Tibial artery (tissue), 4 donors: ENCODE measurements at regions of chr7 and their contacts with region 1.

Region 1: GRCh38 chr7:120867932-120868331 is 10.0 kb upstream of the TSPAN12 start:
- DNase-seq: no peak
- H3K4me3 ChIP-seq: no peak overlapping the region
- H3K27ac ChIP-seq: no peak overlapping the region
- H3K4me1 ChIP-seq: peaks cover 0 to 19% (median 7%) of the 10 kb centered on the region in 4 donors
- H3K27me3 ChIP-seq: no peaks in the 10 kb centered on the region
- CTCF ChIP-seq: no peak

Region 2: DNA sequence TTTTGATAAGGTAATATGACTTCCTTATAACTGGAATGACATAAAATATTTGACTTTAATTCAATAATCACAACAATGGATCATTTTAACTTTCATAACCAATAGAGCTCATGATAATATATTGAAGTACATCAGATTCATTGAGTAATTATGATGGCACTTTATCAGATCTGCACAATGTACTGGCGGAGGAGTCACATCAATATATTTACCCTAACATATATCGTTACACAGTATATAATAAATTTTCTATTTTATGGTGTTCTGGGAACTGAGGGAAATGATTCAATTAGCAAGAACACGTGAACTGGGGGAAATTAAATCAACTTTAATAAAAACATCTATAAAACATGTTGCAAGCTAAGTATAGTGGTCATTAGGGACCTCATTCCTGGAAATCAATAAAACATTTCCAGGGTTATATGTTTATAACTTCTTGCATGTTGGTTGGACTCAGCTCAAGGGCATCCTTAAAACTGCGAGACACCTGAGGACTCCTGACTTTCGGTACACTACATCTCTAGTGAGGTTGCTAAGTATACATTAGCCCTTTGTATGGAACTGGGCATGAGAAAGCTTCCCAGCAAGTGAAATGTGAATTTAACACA is 340.9 kb before region 1 on chr7:
- intact Hi-C with region 1: no loop called
- DNase-seq: no peak
- H3K4me3 ChIP-seq: no peak overlapping the region
- H3K27ac ChIP-seq: no peak overlapping the region
- H3K4me1 ChIP-seq: no peaks in the 10 kb centered on the region
- H3K27me3 ChIP-seq: no peaks in the 10 kb centered on the region
- CTCF ChIP-seq: no peak

Region 3: GRCh38 chr7:120703585-120704240 is 164.2 kb before region 1 on chr7:
- intact Hi-C with region 1: no loop called
- DNase-seq: no peak
- H3K4me3 ChIP-seq: no peak overlapping the region
- H3K27ac ChIP-seq: no peak overlapping the region
- H3K4me1 ChIP-seq: no peaks in the 10 kb centered on the region
- H3K27me3 ChIP-seq: no peaks in the 10 kb centered on the region
- CTCF ChIP-seq: no peak

Region 4: DNA sequence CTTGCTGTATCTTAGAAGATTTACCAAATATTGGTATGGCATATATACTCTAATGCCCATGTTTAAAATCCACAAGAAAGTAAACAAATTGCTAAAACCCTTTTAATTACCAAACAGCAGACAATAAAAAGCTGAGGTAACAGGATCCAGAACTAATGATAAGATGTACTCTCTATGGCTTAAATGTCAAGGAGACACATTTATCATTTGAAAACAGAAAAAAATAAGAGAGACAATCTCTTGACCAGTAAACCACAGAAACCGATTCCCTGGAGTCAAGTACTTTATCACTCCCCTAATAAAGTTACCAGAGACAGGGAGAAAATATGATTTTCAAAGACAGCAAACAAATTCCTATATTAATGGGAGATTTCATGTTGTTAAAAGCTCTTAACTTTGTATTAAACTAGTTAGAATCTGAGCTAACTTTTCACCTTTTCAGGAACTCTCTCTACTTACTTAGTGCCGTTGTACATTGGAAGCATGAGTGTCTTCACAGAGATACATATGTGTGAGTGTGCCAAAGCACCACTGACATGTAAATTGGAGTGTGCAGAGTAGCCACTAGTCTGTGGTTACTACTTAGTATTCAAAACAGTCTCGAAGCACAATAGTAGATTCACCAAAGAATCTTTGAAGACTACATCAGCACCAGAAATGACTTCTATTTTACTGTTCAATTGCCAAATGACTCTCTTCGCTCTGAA is 54.2 kb before region 1 on chr7:
- intact Hi-C with region 1: no loop called
- DNase-seq: no peak
- H3K4me3 ChIP-seq: no peak overlapping the region
- H3K27ac ChIP-seq: no peak overlapping the region
- H3K4me1 ChIP-seq: peaks cover 0 to 4% (median 0%) of the 10 kb centered on the region in 4 donors
- H3K27me3 ChIP-seq: no peaks in the 10 kb centered on the region
- CTCF ChIP-seq: no peak

Region 5: GRCh38 chr7:120927454-120928103 is 59.6 kb after region 1 on chr7:
- intact Hi-C with region 1: loop called (anchors 10 kb)
- DNase-seq: no peak
- H3K4me3 ChIP-seq: no peak overlapping the region
- H3K27ac ChIP-seq: no peak overlapping the region
- H3K4me1 ChIP-seq: no peaks in the 10 kb centered on the region
- H3K27me3 ChIP-seq: no peaks in the 10 kb centered on the region
- CTCF ChIP-seq: no peak

Region 6: GRCh38 chr7:121041516-121042148 is 173.7 kb after region 1 on chr7:
- intact Hi-C with region 1: no loop called
- DNase-seq: no peak
- H3K4me3 ChIP-seq: peak overlapping the region in 1 of 2 donors; percentile 18
- H3K27ac ChIP-seq: peak overlapping the region; percentile 70
- H3K4me1 ChIP-seq: peaks cover 0 to 65% (median 32%) of the 10 kb centered on the region in 4 donors
- H3K27me3 ChIP-seq: no peaks in the 10 kb centered on the region
- CTCF ChIP-seq: no peak